AG04450 (cell line): ENCODE measurements at regions of chr10 and their contacts with region 1.

Region 1: DNA sequence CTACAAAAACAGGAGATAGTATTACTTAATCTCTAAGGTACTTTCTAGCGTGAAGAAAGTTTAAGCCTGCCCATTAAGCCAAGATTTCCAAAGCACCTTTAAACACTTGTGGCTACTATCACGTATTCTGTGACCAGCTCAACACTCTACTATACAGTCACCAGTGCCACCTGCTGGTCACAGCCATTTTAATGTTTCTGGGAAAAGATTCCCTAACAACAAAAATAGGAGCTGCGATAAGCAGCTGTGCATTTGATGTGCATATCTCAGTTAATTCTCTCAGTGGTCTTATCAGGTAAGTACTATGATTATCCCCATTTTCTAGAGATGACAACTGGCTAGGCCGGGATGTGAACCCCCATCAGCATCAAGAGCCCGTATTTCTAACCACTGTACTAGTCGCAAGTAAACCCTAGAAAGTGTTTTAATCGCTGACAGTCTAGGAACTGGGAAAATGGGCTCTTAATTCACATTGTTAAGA is 860 bp downstream of the SEC31B start:
- DNase-seq: no peak
- H3K4me3 ChIP-seq: no peak overlapping the region; the same call in 1 of the 2 replicates
- H3K27ac ChIP-seq: no peak overlapping the region
- H3K27me3 ChIP-seq: no peaks in the 10 kb centered on the region
- CTCF ChIP-seq: peak; percentile 69

Region 2: DNA sequence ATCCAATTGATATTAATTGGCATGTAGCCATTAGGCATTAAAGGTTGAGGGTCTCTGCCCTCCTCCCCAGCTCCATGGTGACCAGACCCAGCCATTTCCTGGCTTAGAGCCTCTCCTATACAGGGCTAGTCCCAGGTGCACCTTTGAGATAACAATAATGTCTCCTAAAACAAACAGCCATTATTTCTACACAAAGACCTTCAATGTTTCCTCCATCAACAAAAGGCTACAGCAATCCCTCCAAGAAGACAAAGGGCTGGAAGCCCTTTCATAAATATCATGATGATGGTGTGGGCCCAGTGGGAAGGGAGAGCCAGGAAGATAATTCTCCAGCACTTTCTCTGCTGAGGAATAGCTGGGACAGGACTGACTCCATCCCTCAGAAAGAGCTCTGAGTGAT is 199.1 kb before region 1 on chr10:
- CTCF ChIA-PET with region 1: no interaction called
- POLR2A ChIA-PET with region 1: no interaction called
- DNase-seq: no peak
- H3K4me3 ChIP-seq: no peak overlapping the region
- H3K27ac ChIP-seq: no peak overlapping the region
- H3K27me3 ChIP-seq: peaks cover 10% of the 10 kb centered on the region
- CTCF ChIP-seq: no peak

Region 3: GRCh38 chr10:100338434-100339036 is 180.3 kb before region 1 on chr10:
- CTCF ChIA-PET with region 1: interaction called, 34 read pairs
- POLR2A ChIA-PET with region 1: no interaction called
- DNase-seq: no peak
- H3K4me3 ChIP-seq: no peak overlapping the region
- H3K27ac ChIP-seq: no peak overlapping the region
- H3K27me3 ChIP-seq: peaks cover 12% of the 10 kb centered on the region
- CTCF ChIP-seq: peak; percentile 96

Region 4: GRCh38 chr10:100433253-100434240 is 85.3 kb before region 1 on chr10:
- CTCF ChIA-PET with region 1: interaction called, 137 read pairs
- POLR2A ChIA-PET with region 1: no interaction called
- DNase-seq: peak; percentile 81
- H3K4me3 ChIP-seq: no peak overlapping the region
- H3K27ac ChIP-seq: no peak overlapping the region
- H3K27me3 ChIP-seq: peaks cover 3% of the 10 kb centered on the region
- CTCF ChIP-seq: peak; percentile 99

Region 5: DNA sequence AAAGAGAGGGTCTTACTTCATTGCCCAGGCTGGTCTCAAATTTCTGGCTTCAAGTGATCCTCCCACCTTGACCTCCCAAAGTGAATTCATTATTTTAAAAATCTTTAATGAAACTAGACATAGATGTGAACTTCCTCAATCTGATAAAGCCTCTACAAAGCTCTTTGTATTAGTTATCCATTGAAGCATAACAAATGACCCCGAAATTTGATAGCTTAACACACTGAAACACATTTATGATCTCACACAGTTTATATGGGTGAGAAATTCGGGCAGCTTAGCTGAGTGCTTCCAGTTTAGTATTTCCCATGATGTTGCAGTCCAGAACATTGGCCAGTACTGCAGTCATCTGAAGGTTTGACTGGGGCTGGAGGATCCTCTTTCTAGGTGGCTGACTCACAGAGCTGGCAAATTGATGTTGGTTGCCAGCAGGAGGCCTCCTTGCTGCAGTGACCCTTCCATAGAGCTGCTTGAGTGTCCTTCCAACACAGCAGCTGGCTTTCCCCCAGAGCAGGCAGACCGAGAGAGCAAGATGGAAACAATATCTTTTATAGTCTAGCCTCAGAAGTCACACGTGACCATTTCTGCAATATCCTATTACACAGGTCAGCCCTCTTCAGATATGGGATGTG is 72.6 kb before region 1 on chr10:
- CTCF ChIA-PET with region 1: interaction called, 11 read pairs
- POLR2A ChIA-PET with region 1: no interaction called
- DNase-seq: no peak
- H3K4me3 ChIP-seq: no peak overlapping the region
- H3K27ac ChIP-seq: no peak overlapping the region
- H3K27me3 ChIP-seq: peaks cover 6% of the 10 kb centered on the region
- CTCF ChIP-seq: no peak

Region 6: DNA sequence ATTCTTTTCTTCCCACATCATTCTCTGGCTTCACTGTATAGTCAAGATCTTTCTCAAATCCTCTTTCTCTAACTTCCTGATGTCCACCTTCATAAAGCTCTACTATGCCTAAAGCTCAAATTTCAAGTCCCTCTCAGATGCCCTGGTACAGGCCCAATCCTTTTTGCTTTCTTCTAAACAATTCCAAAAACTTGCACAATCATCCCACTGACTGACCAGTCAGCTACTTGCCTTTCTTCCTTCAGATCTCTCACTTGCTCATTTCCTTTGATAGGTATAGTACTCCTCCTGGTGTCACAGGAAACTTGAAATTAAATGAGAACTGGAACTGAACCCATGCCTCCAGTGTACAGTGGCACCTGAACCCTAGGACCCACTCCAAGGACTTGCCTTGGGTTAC is 17.4 kb before region 1 on chr10:
- CTCF ChIA-PET with region 1: interaction called, 20 read pairs
- POLR2A ChIA-PET with region 1: no interaction called
- DNase-seq: peak; percentile 11
- H3K4me3 ChIP-seq: no peak overlapping the region
- H3K27ac ChIP-seq: no peak overlapping the region
- H3K27me3 ChIP-seq: no peaks in the 10 kb centered on the region
- CTCF ChIP-seq: no peak

Region 7: DNA sequence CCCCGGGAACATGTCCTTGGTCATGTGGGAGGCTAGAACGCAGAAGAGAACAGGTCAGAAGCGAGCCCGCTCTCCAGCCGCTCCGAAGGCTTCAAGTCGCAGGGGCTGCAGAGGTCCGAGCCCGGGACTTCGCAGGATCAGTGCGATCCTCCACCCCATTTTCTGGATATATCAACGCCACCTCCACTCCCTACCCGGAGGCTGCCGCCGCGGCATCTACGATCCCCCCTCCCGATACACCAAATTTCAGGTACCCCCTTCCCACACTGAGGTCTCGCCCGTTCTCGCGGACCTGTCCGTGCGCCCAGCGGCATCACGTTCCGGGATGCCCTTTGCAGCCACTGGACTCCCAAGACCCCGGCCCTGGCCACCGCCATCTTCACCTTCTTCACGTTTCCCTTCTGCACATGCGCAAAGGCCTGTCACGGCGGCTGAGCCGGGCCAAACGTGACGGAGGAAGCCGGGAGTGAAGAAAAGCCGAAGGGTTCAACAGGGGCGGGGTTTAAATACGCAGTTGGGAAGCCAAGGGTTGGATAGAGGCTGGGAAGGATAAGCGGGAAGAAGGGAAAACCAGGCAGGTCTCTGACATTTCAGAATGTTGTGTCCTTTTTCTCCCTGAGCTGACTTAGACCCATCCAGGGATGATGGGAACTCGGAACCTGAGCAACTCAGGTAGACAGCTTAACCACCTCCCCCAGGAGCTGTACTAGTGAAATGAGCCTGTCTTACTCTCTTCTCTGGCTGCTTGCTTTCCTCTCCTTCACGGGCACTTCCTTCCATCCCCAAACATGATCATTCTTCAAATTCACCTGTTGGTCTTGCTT is 10.9 kb after region 1 on chr10 and contains the start of gene NDUFB8:
- CTCF ChIA-PET with region 1: interaction called, 33 read pairs
- POLR2A ChIA-PET with region 1: no interaction called
- DNase-seq: peak; percentile 39
- H3K4me3 ChIP-seq: peak within 1 kb of the TSS; percentile 92
- H3K27ac ChIP-seq: peak within 1 kb of the TSS; percentile 39
- H3K27me3 ChIP-seq: no peaks in the 10 kb centered on the region
- CTCF ChIP-seq: no peak
- polyA plus RNA-seq, gene NDUFB8: 204 and 211 TPM in 2 replicates

Region 8: GRCh38 chr10:100878291-100878910 is 359.6 kb after region 1 on chr10:
- CTCF ChIA-PET with region 1: interaction called, 52 read pairs
- POLR2A ChIA-PET with region 1: no interaction called
- DNase-seq: peak; percentile 51
- H3K4me3 ChIP-seq: no peak overlapping the region
- H3K27ac ChIP-seq: no peak overlapping the region
- H3K27me3 ChIP-seq: no peaks in the 10 kb centered on the region
- CTCF ChIP-seq: peak; percentile 85